Stomach (tissue), 19 donors: ENCODE measurements at regions of chr6 and their contacts with region 1.

Region 1: GRCh38 chr6:129598244-129599187 is 111.5 kb downstream of the ARHGAP18 start:
- DNase-seq: peak in 1 of 2 donors; percentile 86
- H3K4me3 ChIP-seq: no peak overlapping the region
- H3K27ac ChIP-seq: no peak overlapping the region
- H3K4me1 ChIP-seq: peaks cover 0 to 10% (median 0%) of the 10 kb centered on the region in 4 donors
- H3K27me3 ChIP-seq: no peaks in the 10 kb centered on the region
- CTCF ChIP-seq: peak in 5 of 7 experiments; percentile 51 to 83 (median 76)
- EP300 ChIP-seq: no peak
- POLR2A ChIP-seq: no peak

Region 2: DNA sequence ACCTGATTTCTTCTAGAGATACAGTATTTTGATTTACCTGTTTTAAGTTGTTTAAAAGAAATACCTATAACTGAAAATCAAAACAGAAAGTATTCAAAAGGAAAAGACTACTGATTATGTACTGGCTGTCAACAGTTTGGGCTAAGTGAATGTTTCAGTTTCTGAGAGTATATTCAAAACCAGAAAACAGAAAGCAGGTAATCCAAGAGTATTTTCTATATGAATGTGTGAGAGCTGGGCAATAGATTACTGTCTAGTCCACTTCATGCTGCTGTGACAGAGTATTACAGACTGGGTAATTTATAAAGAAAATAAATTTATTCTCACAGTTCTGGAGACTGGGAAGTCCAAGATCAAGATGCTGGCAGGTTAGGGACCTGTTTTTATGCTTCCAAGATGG is 149.6 kb before region 1 on chr6:
- intact Hi-C with region 1: no loop called
- DNase-seq: no peak
- H3K4me3 ChIP-seq: no peak overlapping the region
- H3K27ac ChIP-seq: no peak overlapping the region
- H3K4me1 ChIP-seq: no peaks in the 10 kb centered on the region
- H3K27me3 ChIP-seq: no peaks in the 10 kb centered on the region
- CTCF ChIP-seq: no peak
- EP300 ChIP-seq: no peak
- POLR2A ChIP-seq: no peak

Region 3: GRCh38 chr6:129525055-129525454 is 73.5 kb before region 1 on chr6:
- intact Hi-C with region 1: no loop called
- DNase-seq: no peak
- H3K4me3 ChIP-seq: no peak overlapping the region
- H3K27ac ChIP-seq: no peak overlapping the region
- H3K4me1 ChIP-seq: no peaks in the 10 kb centered on the region
- H3K27me3 ChIP-seq: no peaks in the 10 kb centered on the region
- CTCF ChIP-seq: no peak
- EP300 ChIP-seq: no peak
- POLR2A ChIP-seq: no peak

Region 4: DNA sequence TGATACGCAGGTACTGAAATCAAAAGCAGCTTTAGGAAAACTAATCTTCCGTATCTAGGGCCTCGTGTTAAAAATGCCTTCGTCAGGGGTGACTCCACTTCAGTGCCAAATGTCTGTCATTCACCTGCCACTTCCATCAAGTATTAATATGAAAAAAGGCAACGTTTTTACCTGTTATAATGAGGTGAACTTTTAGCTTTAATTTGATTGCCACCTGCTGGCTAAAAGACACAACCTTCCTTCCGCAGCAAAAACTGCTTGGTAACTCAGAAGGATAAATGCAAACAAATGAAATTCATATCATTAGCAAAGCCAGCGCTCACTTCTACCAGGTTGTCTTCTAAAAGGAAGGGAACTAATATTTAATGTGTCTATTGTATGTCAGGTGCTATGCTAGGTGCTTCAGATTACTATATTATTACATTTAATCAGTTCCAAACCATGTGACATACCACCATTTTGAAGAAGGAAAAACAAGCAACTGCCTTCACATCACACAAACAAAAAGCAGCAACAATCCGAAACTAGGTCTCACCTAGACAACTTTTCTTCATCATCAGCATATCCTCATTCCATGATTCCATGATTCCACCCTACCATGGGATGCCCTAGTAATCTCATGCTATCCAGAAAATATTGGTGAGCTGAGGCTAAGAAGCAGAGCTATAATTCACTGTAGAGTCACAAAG is 132.1 kb after region 1 on chr6:
- intact Hi-C with region 1: loop called (anchors 5 kb)
- DNase-seq: peak in 1 of 2 donors; percentile 69
- H3K4me3 ChIP-seq: no peak overlapping the region
- H3K27ac ChIP-seq: no peak overlapping the region
- H3K4me1 ChIP-seq: peaks cover 0 to 26% (median 2%) of the 10 kb centered on the region in 4 donors
- H3K27me3 ChIP-seq: no peaks in the 10 kb centered on the region
- CTCF ChIP-seq: peak in 5 of 7 experiments; percentile 30 to 83 (median 63)
- EP300 ChIP-seq: no peak
- POLR2A ChIP-seq: no peak